Gastrocnemius medialis (tissue), 4 donors: ENCODE measurements at regions of chr2 and their contacts with region 1.

Region 1: DNA sequence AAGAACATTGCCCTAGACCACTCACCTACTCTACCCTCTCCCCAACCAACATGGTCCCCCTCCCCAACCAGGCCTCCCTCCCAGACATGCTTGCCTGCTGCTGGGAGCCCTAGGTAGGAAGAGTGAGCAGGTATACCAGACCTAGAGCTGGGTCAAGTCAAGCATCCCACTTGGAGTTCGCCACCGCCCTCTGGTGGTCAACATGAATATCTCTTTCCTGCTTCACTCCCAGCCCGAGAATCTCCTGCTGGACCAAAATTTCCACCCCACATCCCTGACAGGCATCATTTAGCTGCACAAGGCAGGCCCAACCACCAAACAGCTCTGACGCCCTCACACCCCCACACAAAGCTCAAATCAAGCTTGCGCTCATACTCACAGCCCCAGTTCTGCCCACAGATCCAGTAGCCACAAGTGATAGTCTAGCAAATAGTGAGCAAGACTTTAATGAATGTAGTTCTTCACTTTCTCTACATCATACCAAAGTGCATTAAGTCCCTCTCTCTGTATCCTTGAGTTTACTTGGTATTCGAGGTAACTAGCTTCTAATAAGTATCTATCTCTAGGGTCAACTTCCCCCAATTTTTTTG is 116.0 kb downstream of the TNS1 start:
- DNase-seq: peak; percentile 66 to 76
- ATAC-seq: peak; percentile 44 to 69
- H3K4me3 ChIP-seq: no peak overlapping the region
- H3K27ac ChIP-seq: peak overlapping the region; percentile 43 to 87 (median 74)
- H3K4me1 ChIP-seq: peaks cover 25 to 26% of the 10 kb centered on the region in 2 donors
- H3K27me3 ChIP-seq: no peaks in the 10 kb centered on the region
- CTCF ChIP-seq: peak; percentile 81 to 95 (median 89)
- POLR2A ChIP-seq: no peak

Region 2: DNA sequence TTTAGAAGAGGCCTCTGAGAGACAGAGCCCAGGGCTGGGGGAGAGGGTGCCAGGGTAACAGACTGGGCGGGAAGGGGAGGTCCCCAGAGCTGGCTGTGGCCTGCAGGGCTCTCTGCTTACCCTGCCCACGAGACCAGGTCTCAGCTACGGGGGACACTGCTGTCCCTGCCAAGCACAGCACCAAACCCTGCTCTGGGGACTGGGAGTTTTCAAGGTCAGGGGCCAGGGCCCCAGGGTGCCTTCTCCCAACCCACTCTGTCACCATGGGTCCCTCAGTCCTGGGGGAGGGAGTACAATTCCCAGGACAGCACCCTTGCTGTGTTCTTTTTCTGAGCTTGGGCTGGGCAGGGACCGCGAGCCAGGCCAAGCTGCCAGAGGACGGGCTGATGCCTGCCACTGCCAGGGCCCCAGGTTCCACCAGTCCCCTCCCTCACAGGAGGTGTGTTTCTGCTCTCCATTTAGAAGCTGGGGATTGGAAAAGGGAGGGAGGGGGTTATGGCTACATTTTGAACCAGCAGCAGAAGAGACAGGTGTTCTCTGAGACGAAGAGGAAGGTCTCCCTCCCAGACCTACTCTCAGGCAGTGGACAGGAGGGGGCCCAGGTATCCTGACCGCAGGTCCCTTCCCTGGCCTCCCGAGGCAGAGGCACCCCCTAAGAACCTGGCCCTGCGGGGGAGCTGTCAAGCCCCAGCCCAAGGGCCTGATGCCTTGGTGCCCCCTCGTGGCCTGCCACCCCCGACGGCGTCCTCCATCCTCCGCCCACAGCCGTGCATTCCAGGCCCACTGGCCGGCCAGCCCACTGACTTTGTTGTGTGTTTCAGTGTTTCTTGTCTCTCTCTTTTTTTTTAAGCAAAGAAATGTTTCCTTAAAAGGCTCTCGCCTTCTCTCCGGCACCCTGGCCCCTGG is 35.5 kb after region 1 on chr2:
- in situ Hi-C with region 1: no loop called
- intact Hi-C with region 1: loop called (anchors 2 kb)
- DNase-seq: peak in 1 of 2 donors; percentile 49
- ATAC-seq: peak; percentile 50 to 53
- H3K4me3 ChIP-seq: peak overlapping the region in 1 of 4 donors; percentile 32
- H3K27ac ChIP-seq: peak overlapping the region; percentile 87 to 94 (median 92)
- H3K4me1 ChIP-seq: peaks cover 65 to 96% of the 10 kb centered on the region in 2 donors
- H3K27me3 ChIP-seq: no peaks in the 10 kb centered on the region
- CTCF ChIP-seq: peak in 4 of 5 experiments; percentile 42 to 70 (median 62)
- POLR2A ChIP-seq: no peak

Region 3: GRCh38 chr2:217943446-217944389 is 56.9 kb after region 1 on chr2:
- in situ Hi-C with region 1: no loop called
- intact Hi-C with region 1: loop called (anchors 5 kb)
- DNase-seq: peak; percentile 58 to 62
- ATAC-seq: peak; percentile 54 to 60
- H3K4me3 ChIP-seq: peak overlapping the region; percentile 53 to 61 (median 56)
- H3K27ac ChIP-seq: peak overlapping the region; percentile 87 to 94 (median 89)
- H3K4me1 ChIP-seq: peaks cover 33 to 41% of the 10 kb centered on the region in 2 donors
- H3K27me3 ChIP-seq: no peaks in the 10 kb centered on the region
- CTCF ChIP-seq: peak in 3 of 5 experiments; percentile 6 to 58 (median 45)
- POLR2A ChIP-seq: peak; percentile 75 to 77